ENCODE measurements at regions of chr11 and their contacts with region 1.

Region 1: GRCh38 chr11:102614485-102614884 is 10.6 kb downstream of the MMP20 start:
- DNase-seq: no peak
- ATAC-seq: no peak
- H3K4me3 Mint-ChIP-seq: no peak overlapping the region
- H3K27ac Mint-ChIP-seq: no peak overlapping the region
- H3K4me1 Mint-ChIP-seq: peaks cover 32% of the 10 kb centered on the region
- H3K27me3 Mint-ChIP-seq: no peaks in the 10 kb centered on the region
- CTCF ChIP-seq: no peak

Region 2: GRCh38 chr11:102341844-102342318 is 272.6 kb before region 1 on chr11:
- CTCF ChIA-PET with region 1: interaction called, 120 read pairs
- POLR2A ChIA-PET with region 1: interaction called, 5 read pairs
- intact Hi-C with region 1: loop called (anchors 1 kb)
- DNase-seq: no peak
- ATAC-seq: peak; percentile 37
- H3K4me3 Mint-ChIP-seq: no peak overlapping the region
- H3K27ac Mint-ChIP-seq: peak overlapping the region; percentile 42
- H3K4me1 Mint-ChIP-seq: peaks cover 29% of the 10 kb centered on the region
- H3K27me3 Mint-ChIP-seq: no peaks in the 10 kb centered on the region
- CTCF ChIP-seq: peak; percentile 50

Region 3: DNA sequence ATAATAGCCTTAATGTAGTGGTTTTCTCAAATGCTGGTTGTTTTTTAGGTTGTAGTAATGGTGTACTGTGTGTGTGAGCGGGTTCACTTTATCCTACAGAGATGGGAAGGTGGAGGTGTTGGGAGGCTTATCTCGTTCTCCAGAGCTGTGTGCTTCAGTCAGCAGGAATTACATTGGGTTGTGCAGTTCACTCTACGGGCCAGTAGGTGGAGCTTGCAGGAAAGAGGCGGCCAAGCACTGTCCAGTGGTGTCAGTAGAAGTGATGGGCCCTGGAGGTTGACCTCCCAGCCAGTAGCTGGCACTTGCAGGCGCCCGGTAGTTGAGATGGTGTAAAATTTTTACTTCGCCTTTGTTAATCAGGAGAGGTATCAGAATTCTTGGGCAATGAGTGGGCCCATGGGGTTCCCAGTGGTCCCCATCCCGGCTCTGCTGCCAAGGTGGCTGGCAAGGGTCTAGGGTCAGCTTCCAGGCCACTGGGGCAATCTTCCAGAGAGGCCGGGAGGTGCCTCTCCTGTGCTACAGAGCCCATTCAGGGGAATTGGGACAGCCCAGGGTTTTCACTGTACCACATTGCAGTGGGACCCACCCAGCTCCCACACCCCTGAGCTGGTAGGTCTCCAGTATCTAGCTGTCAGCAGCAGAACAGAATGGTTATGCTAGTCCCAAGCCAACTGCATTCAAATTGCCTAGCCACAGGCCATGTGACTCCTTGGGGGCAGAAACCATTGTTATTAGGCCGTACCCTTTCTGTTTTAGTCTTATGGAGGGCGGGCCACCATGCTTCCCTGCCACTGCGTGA is 223.6 kb before region 1 on chr11:
- CTCF ChIA-PET with region 1: interaction called, 86 read pairs
- POLR2A ChIA-PET with region 1: interaction called, 4 read pairs
- intact Hi-C with region 1: loop called (anchors 1 kb)
- DNase-seq: peak; percentile 37
- ATAC-seq: peak; percentile 95
- H3K4me3 Mint-ChIP-seq: no peak overlapping the region
- H3K27ac Mint-ChIP-seq: no peak overlapping the region
- H3K4me1 Mint-ChIP-seq: peaks cover 13% of the 10 kb centered on the region
- H3K27me3 Mint-ChIP-seq: no peaks in the 10 kb centered on the region
- CTCF ChIP-seq: peak; percentile 85

Region 4: DNA sequence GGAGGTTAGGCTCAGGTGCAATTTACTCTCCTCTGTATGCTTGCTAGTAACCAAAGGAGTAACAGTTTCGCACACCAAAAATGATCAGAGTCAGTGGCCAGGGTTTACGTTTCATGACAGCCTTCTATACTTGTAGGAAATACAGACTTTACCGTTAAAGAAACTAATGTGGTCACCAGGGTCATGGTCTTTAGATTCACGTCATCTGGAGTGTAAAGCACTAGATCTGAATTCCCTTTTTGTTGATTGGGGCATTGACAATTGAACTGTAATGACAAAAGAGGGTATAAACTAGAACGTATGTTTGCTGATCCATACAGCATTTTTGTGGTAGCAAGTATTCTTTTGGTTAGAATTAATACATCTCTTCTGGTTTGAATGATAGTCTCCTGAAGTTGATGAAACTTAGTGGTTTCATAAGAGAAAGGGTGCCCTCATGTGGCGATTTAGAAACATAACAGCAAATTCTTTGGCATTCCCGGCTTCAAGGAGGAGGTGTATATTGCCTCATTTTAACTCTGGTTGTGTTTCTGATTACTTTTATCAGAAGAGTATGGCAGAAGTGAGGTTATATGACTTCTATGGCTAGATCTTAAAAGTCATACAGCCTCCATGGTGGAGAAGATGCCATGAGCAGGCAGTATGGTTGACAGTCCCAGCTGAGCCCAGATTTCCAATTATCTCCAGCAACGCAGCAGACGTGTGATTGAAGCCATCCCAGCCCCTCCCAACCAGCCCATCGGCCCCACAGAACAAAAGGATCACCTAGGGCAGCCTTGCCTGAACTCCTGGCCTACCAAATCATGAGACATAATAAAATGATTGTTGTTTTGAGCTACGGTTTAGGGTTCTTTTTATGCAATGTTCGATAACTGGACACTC is 119.1 kb before region 1 on chr11:
- CTCF ChIA-PET with region 1: interaction called, 52 read pairs
- POLR2A ChIA-PET with region 1: interaction called, 6 read pairs
- intact Hi-C with region 1: loop called (anchors 1 kb)
- DNase-seq: no peak
- ATAC-seq: peak; percentile 77
- H3K4me3 Mint-ChIP-seq: no peak overlapping the region
- H3K27ac Mint-ChIP-seq: peak overlapping the region; percentile 53
- H3K4me1 Mint-ChIP-seq: peaks cover 17% of the 10 kb centered on the region
- H3K27me3 Mint-ChIP-seq: no peaks in the 10 kb centered on the region
- CTCF ChIP-seq: no peak

Region 5: GRCh38 chr11:102560555-102561011 is 53.9 kb before region 1 on chr11:
- CTCF ChIA-PET with region 1: interaction called, 9 read pairs
- POLR2A ChIA-PET with region 1: interaction called, 3 read pairs
- intact Hi-C with region 1: loop called (anchors 1 kb)
- DNase-seq: no peak
- ATAC-seq: peak; percentile 61
- H3K4me3 Mint-ChIP-seq: peak overlapping the region; percentile 72
- H3K27ac Mint-ChIP-seq: peak overlapping the region; percentile 86
- H3K4me1 Mint-ChIP-seq: peaks cover 63% of the 10 kb centered on the region
- H3K27me3 Mint-ChIP-seq: no peaks in the 10 kb centered on the region
- CTCF ChIP-seq: no peak

Region 6: DNA sequence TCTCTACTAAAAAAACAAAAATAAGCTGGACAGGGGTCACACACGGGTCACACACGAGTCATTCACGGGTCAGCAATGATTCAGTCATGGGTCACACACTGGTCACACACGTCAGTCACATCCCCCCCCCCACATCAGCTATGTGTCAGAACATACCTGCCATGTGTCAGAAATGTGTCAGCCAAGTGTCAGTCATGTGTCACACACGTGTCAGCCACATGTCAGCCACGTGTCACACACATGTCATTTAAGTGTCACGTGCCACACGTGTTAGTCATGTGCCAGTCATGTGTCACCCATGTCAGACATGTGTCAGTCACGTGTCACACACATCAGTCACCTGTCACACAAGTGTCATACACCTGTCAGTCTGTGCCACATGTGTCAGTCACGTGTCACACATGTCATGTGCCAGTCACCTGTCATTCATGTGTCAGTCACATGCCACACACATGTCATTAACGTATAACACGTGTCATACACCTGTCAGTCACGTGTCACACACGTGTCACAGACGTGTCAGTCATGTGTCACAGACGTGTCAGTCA is 39.3 kb after region 1 on chr11:
- CTCF ChIA-PET with region 1: no interaction called
- POLR2A ChIA-PET with region 1: no interaction called
- intact Hi-C with region 1: no loop called
- DNase-seq: no peak
- ATAC-seq: no peak
- H3K4me3 Mint-ChIP-seq: no peak overlapping the region
- H3K27ac Mint-ChIP-seq: no peak overlapping the region
- H3K4me1 Mint-ChIP-seq: no peaks in the 10 kb centered on the region
- H3K27me3 Mint-ChIP-seq: peaks cover 21% of the 10 kb centered on the region
- CTCF ChIP-seq: no peak

Region 7: DNA sequence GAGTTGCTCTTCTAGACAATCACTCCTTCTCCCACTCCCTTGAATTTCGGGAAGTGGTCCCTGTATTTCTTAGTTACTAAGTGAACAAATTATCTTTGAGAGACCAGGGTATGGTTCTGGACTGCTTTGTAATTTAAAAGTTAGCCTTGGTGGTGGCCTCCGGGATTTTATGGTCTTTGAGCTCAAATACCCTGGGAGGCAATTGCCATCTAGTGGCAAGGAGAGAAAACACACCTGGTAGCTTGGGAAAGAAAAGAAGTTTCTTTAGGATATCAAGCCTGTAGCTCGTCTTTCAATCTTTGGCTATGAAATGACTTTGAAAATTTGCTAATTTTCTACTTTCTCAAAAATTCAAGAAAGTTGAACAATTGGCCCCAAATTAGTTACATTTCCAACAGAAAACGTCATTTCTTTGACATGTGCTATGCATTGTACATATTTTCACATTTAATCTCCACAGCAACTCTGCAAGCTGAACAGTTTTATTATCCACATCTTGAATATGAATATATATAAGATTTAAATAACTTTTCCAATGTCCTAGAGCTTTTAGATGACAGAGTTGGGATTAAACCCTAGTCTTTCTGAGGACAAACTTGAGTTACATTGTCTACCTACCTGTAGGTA is 52.0 kb after region 1 on chr11:
- CTCF ChIA-PET with region 1: interaction called, 14 read pairs
- POLR2A ChIA-PET with region 1: no interaction called
- intact Hi-C with region 1: no loop called
- DNase-seq: no peak
- ATAC-seq: peak; percentile 54
- H3K4me3 Mint-ChIP-seq: no peak overlapping the region
- H3K27ac Mint-ChIP-seq: no peak overlapping the region
- H3K4me1 Mint-ChIP-seq: peaks cover 3% of the 10 kb centered on the region
- H3K27me3 Mint-ChIP-seq: no peaks in the 10 kb centered on the region
- CTCF ChIP-seq: no peak

Measured in activated B cell treated with CpG ODN at 0.5 μM for 24 hours (primary cell).